HCT116 (cell line): ENCODE measurements at regions of chr6 and their contacts with region 1.

Region 1: DNA sequence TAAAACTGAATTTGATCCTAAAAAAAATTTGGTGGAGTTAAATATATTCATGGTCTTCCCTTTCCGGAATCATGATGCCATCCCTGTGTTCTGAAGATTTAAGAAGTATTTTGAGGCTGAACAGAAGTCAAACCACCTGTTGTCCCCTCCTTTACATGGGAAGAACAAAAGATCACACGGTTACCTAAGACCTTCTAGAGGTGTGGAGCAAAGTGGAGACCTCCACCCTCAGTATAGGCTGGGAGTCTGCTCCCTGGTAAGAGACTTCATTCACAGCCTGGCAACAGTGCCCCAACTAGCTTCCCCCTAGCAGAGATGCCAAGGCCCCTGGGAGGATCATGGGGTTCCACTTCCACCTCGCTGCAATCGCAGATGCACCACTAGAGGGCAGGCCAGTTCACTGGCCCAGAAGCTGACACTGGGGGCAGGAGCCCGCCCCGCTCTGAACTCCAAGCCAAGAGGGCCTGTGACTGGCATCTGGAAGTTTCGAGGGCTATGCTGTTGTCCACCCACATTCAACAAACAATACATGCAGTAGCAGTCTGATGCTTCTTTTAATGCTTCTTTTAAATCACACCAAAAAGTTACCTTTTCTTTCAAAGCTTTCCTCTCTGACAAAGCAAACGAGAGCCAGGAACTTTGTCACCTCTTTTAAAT is 19.5 kb upstream of the UBE2J1 start:
- DNase-seq: no peak
- ATAC-seq: peak; percentile 90
- H3K4me3 ChIP-seq: no peak overlapping the region
- H3K27ac ChIP-seq: no peak overlapping the region
- H3K4me1 ChIP-seq: peaks cover 9 to 14% of the 10 kb centered on the region in 2 experiments
- H3K27me3 ChIP-seq: no peaks in the 10 kb centered on the region
- CTCF ChIP-seq: peak; percentile 67 to 99 (median 98); a peak in 5 of 6 replicates
- POLR2A ChIP-seq: no peak
- RAD21 ChIP-seq: peak; percentile 73

Region 2: GRCh38 chr6:88982720-88983119 is 389.3 kb before region 1 on chr6:
- CTCF ChIA-PET with region 1: interaction called, 13 read pairs
- POLR2A ChIA-PET with region 1: no interaction called
- RAD21 ChIA-PET with region 1: no interaction called
- intact Hi-C with region 1: loop called (anchors 2 kb)
- DNase-seq: peak; percentile 57
- ATAC-seq: peak; percentile 83
- H3K4me3 ChIP-seq: no peak overlapping the region
- H3K27ac ChIP-seq: no peak overlapping the region
- H3K4me1 ChIP-seq: 0 out of 4 replicates have a peak, but pooled peaks cover 2% of the 10 kb centered on the region in 2 experiments
- H3K27me3 ChIP-seq: 0 out of 2 replicates have a peak, but pooled peaks cover 3% of the 10 kb centered on the region
- CTCF ChIP-seq: peak; percentile 52 to 80 (median 79)
- POLR2A ChIP-seq: no peak
- RAD21 ChIP-seq: peak; percentile 93

Region 3: DNA sequence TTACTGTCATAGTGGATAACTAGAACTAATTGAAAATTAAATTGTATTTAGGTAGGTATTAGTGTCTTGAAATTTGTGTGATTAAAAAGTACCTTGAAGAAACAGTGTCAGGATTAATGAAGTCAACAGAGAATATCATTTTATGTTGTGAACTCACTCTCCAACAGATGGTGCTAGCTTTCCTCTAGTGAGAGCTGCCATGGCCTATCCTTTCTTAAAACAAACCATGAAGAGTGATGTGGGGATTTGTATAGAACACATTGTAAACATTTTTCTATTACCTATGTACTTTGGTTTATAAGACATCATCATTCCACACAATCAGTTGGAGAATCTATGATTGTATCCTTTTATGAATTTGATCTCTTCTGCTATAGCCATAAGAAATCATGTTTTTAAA is 249.4 kb before region 1 on chr6:
- CTCF ChIA-PET with region 1: interaction called, 5 read pairs
- POLR2A ChIA-PET with region 1: no interaction called
- RAD21 ChIA-PET with region 1: no interaction called
- intact Hi-C with region 1: loop called (anchors 2 kb)
- DNase-seq: peak; percentile 21
- ATAC-seq: peak; percentile 90
- H3K4me3 ChIP-seq: no peak overlapping the region
- H3K27ac ChIP-seq: no peak overlapping the region
- H3K4me1 ChIP-seq: peaks cover 0 to 8% of the 10 kb centered on the region in 2 experiments; a peak in 2 of 4 replicates
- H3K27me3 ChIP-seq: no peaks in the 10 kb centered on the region
- CTCF ChIP-seq: peak; percentile 38 to 61 (median 55); a peak in 4 of 6 replicates
- POLR2A ChIP-seq: no peak
- RAD21 ChIP-seq: peak; percentile 82

Region 4: GRCh38 chr6:89281779-89282246 is 90.2 kb before region 1 on chr6:
- CTCF ChIA-PET with region 1: no interaction called
- POLR2A ChIA-PET with region 1: no interaction called
- RAD21 ChIA-PET with region 1: no interaction called
- intact Hi-C with region 1: loop called (anchors 2 kb)
- DNase-seq: peak; percentile 66
- ATAC-seq: peak; percentile 99
- H3K4me3 ChIP-seq: no peak overlapping the region
- H3K27ac ChIP-seq: no peak overlapping the region
- H3K4me1 ChIP-seq: peaks cover 0 to 6% of the 10 kb centered on the region in 2 experiments; a peak in 1 of 4 replicates
- H3K27me3 ChIP-seq: no peaks in the 10 kb centered on the region
- CTCF ChIP-seq: peak; percentile 60 to 92 (median 74)
- POLR2A ChIP-seq: no peak
- RAD21 ChIP-seq: peak; percentile 69

Region 5: DNA sequence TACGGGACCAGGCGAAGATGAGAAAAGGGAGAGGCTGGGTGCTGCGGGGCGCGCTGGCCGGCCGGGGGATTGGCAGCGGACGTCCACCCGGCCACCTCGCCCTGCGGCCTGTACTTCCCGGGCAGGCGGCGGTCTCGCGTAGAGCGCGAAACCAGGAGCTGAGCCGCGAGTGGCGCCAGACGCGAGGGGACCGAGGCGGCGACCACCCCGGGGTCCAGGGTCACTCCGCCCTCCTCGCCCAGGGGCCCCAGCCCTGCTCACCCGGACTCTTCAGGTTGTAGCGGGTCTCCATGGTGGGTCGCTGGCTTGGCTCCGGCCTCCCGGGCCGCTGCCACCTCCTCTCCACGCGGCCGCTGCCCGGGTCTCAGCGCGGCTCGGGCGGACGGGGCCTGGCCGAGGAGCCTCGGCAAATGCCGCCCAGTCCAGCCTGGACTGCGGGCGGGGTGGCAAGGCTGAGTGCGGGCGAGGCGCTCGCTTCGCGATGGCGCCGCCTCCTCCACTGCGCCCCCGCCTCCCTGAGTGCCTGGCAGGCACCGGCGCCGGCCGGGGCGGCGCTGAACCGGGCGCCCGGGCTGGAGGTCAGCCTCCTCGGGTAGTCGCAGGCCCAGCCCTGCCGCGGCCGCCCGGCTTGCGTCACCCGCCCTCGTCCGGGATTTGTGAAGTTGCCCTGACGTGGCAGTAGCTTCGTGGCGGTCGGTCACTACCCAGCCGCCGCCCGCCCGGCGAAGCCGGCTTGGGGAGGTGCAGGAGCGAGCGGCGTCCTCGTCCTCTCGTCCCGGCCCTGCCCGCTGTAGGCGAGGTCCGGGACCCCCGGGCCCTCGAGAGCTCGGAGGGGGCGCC is 19.5 kb before region 1 on chr6 and contains the start of gene UBE2J1:
- CTCF ChIA-PET with region 1: interaction called, 11 read pairs
- POLR2A ChIA-PET with region 1: no interaction called
- RAD21 ChIA-PET with region 1: no interaction called
- intact Hi-C with region 1: no loop called
- DNase-seq: peak; percentile 57
- ATAC-seq: peak; percentile 93
- H3K4me3 ChIP-seq: peak within 1 kb of the TSS; percentile 64 to 71
- H3K27ac ChIP-seq: peak within 1 kb of the TSS; percentile 79
- H3K4me1 ChIP-seq: peaks cover 14 to 25% of the 10 kb centered on the region in 2 experiments
- H3K27me3 ChIP-seq: no peaks in the 10 kb centered on the region
- CTCF ChIP-seq: no peak
- POLR2A ChIP-seq: peak; percentile 64
- RAD21 ChIP-seq: no peak
- total RNA-seq, gene UBE2J1: 23.3 TPM

Region 6: GRCh38 chr6:89610149-89610642 is 238.2 kb after region 1 on chr6:
- CTCF ChIA-PET with region 1: interaction called, 5 read pairs
- POLR2A ChIA-PET with region 1: no interaction called
- RAD21 ChIA-PET with region 1: no interaction called
- intact Hi-C with region 1: loop called (anchors 1 kb)
- DNase-seq: peak; percentile 19
- ATAC-seq: peak; percentile 89
- H3K4me3 ChIP-seq: no peak overlapping the region
- H3K27ac ChIP-seq: no peak overlapping the region
- H3K4me1 ChIP-seq: no peaks in the 10 kb centered on the region
- H3K27me3 ChIP-seq: no peaks in the 10 kb centered on the region
- CTCF ChIP-seq: peak; percentile 64 to 95 (median 89); a peak in 5 of 6 replicates
- POLR2A ChIP-seq: no peak
- RAD21 ChIP-seq: peak; percentile 63

Region 7: GRCh38 chr6:90478789-90479602 is 1107.0 kb after region 1 on chr6:
- CTCF ChIA-PET with region 1: interaction called, 3 read pairs
- POLR2A ChIA-PET with region 1: no interaction called
- RAD21 ChIA-PET with region 1: no interaction called
- intact Hi-C with region 1: loop called (anchors 5 kb)
- DNase-seq: peak; percentile 87
- ATAC-seq: peak; percentile 96
- H3K4me3 ChIP-seq: no peak overlapping the region
- H3K27ac ChIP-seq: no peak overlapping the region
- H3K4me1 ChIP-seq: peaks cover 0 to 11% of the 10 kb centered on the region in 2 experiments; a peak in 2 of 4 replicates
- H3K27me3 ChIP-seq: no peaks in the 10 kb centered on the region
- CTCF ChIP-seq: peak; percentile 79 to 91 (median 87)
- POLR2A ChIP-seq: no peak
- RAD21 ChIP-seq: peak; percentile 99